RWPE1 (cell line): ENCODE measurements at regions of chr11 and their contacts with region 1.

Region 1: DNA sequence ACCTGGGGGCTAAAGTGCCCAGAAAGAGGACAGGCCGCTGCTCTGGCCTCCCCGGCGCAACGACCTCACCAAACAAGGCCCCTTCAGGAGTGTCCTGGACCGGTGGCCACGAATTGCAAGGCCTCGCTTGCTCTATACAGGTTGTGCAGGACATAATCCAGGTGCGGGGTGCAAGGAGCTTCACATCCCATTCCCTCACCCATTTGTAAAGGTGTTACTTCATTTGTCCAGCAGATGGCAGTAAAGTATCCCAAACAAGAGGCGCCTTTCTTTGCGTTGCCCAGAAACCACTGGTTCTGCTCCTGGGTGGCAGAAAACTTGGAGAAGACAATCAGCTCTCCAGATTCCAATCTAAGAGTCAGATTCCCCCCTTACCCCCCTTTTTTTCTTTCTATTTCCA is 35.9 kb upstream of the PRDM11 start:
- DNase-seq: peak; percentile 62
- H3K27ac ChIP-seq: no peak overlapping the region
- CTCF ChIP-seq: peak; percentile 69

Region 2: GRCh38 chr11:45289369-45289768 is 178.8 kb after region 1 on chr11:
- CTCF ChIA-PET with region 1: interaction called, 14 read pairs
- POLR2A ChIA-PET with region 1: no interaction called
- DNase-seq: peak; percentile 42
- H3K27ac ChIP-seq: no peak overlapping the region
- CTCF ChIP-seq: no peak

Region 3: DNA sequence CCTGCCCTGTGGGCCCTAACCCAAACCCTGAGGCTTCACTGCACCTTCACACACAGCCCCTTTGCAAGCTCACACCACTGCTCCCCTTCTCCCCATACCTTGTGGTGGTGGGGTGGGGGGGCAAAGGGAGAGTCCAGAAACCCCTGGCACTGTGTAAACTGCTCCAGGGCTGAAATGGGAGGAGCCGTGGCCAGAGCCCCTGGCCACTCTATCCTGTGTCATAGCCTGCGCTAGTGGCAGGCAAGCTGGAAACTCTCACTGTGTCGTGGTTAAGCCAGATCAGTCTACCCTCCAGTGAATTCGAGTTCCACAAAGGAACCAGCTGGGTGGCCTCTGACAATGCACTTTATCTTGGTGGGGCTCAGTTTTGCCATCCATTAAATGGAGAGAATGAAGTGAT is 183.9 kb after region 1 on chr11:
- CTCF ChIA-PET with region 1: interaction called, 14 read pairs
- POLR2A ChIA-PET with region 1: no interaction called
- DNase-seq: no peak
- H3K27ac ChIP-seq: no peak overlapping the region
- CTCF ChIP-seq: no peak

Region 4: GRCh38 chr11:45332276-45332934 is 221.8 kb after region 1 on chr11:
- CTCF ChIA-PET with region 1: interaction called, 18 read pairs
- POLR2A ChIA-PET with region 1: no interaction called
- DNase-seq: peak; percentile 79
- H3K27ac ChIP-seq: no peak overlapping the region
- CTCF ChIP-seq: peak; percentile 79